Activated CD8-positive, alpha-beta T cell treated with anti-CD3 and anti-CD28 coated beads for 36 hours (primary cell): ENCODE measurements at regions of chr6 and their contacts with region 1.

Region 1: DNA sequence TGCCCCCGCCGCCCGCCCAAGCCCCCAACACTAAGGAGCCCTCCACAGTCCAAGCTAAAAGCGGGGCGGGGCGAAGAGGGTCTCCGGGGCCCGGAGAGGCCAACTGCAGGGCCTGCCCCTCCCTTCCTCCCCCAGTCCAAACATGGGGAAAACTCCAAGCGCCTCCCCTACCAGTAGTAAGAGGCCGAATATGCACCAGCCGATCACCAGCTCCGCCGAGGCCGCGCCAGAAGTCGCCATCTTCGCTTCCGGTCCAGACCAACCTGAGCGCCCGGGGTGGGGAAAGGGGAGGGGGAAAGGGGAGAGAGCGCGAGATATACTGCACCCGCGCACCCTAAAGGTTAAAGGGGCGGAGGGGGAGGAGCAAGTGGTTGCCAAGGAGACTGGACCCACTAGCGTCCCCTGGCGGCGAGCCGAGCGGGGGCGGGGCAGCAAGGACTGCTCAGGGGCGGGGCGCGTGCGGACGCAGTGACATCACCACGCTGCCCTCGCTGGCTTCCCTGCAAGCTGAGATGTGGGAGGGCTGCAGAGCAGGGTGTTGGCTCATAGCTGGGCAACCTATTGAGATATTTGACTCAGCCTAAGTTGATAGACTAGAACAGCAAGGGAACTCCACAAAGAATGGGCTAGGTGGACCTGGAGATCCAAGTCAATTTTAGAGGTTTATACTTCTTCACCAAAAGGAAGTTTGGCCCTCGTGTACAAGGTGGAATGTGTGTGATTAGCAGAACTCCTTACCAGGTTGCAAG is at the start of gene LMBRD1:
- DNase-seq: peak; percentile 99
- ATAC-seq: peak; percentile 93
- H3K4me3 Mint-ChIP-seq: peak within 1 kb of the TSS; percentile 85
- H3K27ac Mint-ChIP-seq: peak within 1 kb of the TSS; percentile 93
- H3K4me1 Mint-ChIP-seq: peaks cover 42% of the 10 kb centered on the region
- H3K27me3 Mint-ChIP-seq: no peaks in the 10 kb centered on the region
- CTCF ChIP-seq: peak; percentile 82
- total RNA-seq, gene LMBRD1: 14.6 to 15.9 TPM

Region 2: DNA sequence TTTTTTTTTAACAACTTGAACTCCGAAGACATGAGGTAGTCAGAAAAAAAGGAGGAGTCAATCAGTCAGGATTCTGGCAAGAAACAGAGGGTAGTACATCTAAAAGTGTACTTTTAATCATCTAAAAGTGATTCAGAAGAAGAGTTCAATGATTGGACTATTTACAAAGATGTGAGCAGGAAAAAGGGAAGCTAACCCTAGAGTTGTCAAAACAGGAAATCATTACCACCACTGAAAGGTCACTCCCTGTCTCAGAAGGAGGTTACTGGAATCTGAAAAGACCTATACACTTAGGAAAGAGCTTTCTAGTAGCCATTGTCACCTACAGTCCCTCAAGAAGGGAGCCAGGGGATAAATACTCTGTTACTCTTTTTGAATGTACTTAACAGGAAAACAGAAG is 16.7 kb after region 1 on chr6:
- CTCF ChIA-PET with region 1: interaction called, 64 read pairs
- POLR2A ChIA-PET with region 1: interaction called, 8 read pairs
- intact Hi-C with region 1: loop called (anchors 2 kb)
- DNase-seq: no peak
- ATAC-seq: no peak
- H3K4me3 Mint-ChIP-seq: no peak overlapping the region
- H3K27ac Mint-ChIP-seq: peak overlapping the region; percentile 46
- H3K4me1 Mint-ChIP-seq: peaks cover 56% of the 10 kb centered on the region
- H3K27me3 Mint-ChIP-seq: no peaks in the 10 kb centered on the region
- CTCF ChIP-seq: no peak

Region 3: DNA sequence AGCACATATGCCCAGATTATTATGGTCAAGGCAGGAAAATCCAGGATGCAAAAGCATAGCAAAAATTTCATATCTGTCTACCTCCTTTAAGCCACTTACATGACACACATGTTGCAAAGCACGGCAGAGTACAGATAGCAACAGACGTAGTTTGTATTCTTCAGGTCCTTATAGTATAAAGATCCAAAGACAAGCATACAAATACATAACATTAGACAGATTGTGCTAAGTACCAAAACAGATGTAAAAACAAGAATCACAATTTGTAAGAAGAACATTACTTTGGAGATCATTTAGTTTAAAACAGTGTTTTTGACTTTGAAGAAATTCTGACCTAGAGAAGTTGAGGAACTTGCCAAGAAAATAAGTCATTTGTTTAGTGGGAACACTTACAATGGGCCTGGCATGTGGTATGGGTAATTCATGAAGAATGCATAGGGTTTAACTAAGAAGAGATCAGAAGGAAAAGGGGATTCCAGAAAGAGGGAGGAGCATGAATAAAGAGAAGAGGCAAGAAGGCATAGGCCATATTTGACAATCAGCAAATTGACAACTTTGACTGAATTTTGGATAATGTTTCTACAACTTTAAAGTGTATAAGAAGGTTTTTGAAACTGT is 30.6 kb after region 1 on chr6:
- CTCF ChIA-PET with region 1: no interaction called
- POLR2A ChIA-PET with region 1: no interaction called
- intact Hi-C with region 1: no loop called
- DNase-seq: no peak
- ATAC-seq: no peak
- H3K4me3 Mint-ChIP-seq: no peak overlapping the region
- H3K27ac Mint-ChIP-seq: no peak overlapping the region
- H3K4me1 Mint-ChIP-seq: no peaks in the 10 kb centered on the region
- H3K27me3 Mint-ChIP-seq: no peaks in the 10 kb centered on the region
- CTCF ChIP-seq: no peak